Right cardiac atrium (tissue), 5 donors: ENCODE measurements at regions of chr4 and their contacts with region 1.

Region 1: GRCh38 chr4:168839758-168840391 is 170.2 kb downstream of the CBR4 start:
- DNase-seq: no peak
- ATAC-seq: peak; percentile 69 to 85
- H3K4me3 ChIP-seq: no peak overlapping the region
- H3K27ac ChIP-seq: peak overlapping the region; percentile 91
- H3K4me1 ChIP-seq: peaks cover 20% of the 10 kb centered on the region
- H3K27me3 ChIP-seq: no peaks in the 10 kb centered on the region

Region 2: DNA sequence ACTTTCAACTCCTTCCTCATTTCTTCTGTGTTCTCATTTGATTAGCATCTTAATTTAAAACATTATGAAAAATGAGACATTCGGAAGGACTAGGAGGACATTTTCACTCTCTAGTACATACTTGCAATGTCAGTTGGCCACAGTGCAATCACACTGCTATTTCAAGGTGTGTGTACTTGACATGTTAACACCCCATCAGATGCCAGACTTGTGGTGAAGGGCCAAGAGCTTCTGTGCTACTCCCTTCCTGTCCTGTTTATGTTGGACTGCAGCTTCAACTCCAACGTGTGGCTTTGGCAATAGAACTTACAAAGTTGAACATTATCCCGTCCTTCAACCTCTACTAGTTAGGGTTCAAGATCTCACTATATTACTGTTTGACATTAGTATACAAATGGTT is 122.0 kb before region 1 on chr4:
- intact Hi-C with region 1: loop called in 3 of 4 experiments (anchors 5 to 10 kb)
- DNase-seq: peak; percentile 27 to 72 (median 50)
- ATAC-seq: peak; percentile 92 to 93
- H3K4me3 ChIP-seq: no peak overlapping the region
- H3K27ac ChIP-seq: no peak overlapping the region
- H3K4me1 ChIP-seq: peaks cover 3% of the 10 kb centered on the region
- H3K27me3 ChIP-seq: no peaks in the 10 kb centered on the region

Region 3: GRCh38 chr4:168796362-168797106 is 43.3 kb before region 1 on chr4:
- intact Hi-C with region 1: no loop called
- DNase-seq: no peak
- ATAC-seq: peak; percentile 63 to 85
- H3K4me3 ChIP-seq: no peak overlapping the region
- H3K27ac ChIP-seq: peak overlapping the region; percentile 70
- H3K4me1 ChIP-seq: peaks cover 3% of the 10 kb centered on the region
- H3K27me3 ChIP-seq: no peaks in the 10 kb centered on the region

Region 4: GRCh38 chr4:168880811-168881595 is 41.1 kb after region 1 on chr4:
- intact Hi-C with region 1: loop called in 1 of 4 experiments (anchors 5 kb)
- DNase-seq: no peak
- ATAC-seq: no peak
- H3K4me3 ChIP-seq: no peak overlapping the region
- H3K27ac ChIP-seq: no peak overlapping the region
- H3K4me1 ChIP-seq: peaks cover 7% of the 10 kb centered on the region
- H3K27me3 ChIP-seq: no peaks in the 10 kb centered on the region